ENCODE measurements at regions of chr18 and their contacts with region 1.

Region 1: DNA sequence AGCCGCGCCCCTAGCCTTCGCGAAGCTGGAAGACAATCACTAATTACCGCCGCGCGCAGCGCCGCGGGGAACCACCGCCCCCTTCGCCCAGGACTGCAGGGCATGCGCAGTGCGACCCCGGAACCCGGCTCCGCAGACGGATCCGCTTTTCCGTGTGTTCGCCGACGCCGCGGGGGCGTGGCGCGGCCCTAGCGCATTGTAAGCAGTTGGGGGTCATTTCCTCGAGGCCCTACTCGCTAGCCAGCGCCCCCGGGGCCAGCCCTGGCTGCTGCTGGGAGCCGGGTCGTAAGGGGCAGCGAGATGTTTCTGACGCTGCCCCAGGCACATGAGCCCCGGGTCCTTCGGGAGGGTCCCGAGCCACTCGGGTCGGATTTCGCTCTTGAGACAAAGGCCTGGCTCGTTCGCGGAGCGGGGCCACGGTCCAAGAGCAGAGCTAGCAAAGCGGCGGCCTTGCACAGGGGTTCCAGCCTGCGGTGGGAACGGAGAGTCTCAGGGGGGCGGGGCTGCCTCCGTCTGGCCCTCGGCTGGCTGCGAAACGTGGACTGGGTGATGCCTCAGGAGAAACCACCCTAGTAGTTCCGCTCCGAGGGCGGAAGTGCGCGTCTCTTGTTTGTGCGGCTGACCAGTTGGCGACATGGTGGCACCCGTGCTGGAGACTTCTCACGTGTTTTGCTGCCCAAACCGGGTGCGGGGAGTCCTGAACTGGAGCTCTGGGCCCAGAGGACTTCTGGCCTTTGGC is at the starts of genes ELP2 and SLC39A6:
- DNase-seq: peak; percentile 96 to 98
- ATAC-seq: peak; percentile 96 to 97
- H3K4me3 ChIP-seq: peak within 1 kb of the TSS; percentile 93 to 100 (median 97)
- H3K27ac ChIP-seq: peak within 1 kb of the TSS; percentile 99 to 100 (median 100)
- H3K4me1 ChIP-seq: peaks cover 23 to 30% of the 10 kb centered on the region in 2 donors
- H3K27me3 ChIP-seq: no peaks in the 10 kb centered on the region
- CTCF ChIP-seq: no peak
- POLR2A ChIP-seq: peak; percentile 68 to 72
- total RNA-seq, gene ELP2: 23.7 to 51.0 (median 42.8) TPM
- total RNA-seq, gene SLC39A6: 16.7 to 24.7 (median 18.3) TPM

Region 2: DNA sequence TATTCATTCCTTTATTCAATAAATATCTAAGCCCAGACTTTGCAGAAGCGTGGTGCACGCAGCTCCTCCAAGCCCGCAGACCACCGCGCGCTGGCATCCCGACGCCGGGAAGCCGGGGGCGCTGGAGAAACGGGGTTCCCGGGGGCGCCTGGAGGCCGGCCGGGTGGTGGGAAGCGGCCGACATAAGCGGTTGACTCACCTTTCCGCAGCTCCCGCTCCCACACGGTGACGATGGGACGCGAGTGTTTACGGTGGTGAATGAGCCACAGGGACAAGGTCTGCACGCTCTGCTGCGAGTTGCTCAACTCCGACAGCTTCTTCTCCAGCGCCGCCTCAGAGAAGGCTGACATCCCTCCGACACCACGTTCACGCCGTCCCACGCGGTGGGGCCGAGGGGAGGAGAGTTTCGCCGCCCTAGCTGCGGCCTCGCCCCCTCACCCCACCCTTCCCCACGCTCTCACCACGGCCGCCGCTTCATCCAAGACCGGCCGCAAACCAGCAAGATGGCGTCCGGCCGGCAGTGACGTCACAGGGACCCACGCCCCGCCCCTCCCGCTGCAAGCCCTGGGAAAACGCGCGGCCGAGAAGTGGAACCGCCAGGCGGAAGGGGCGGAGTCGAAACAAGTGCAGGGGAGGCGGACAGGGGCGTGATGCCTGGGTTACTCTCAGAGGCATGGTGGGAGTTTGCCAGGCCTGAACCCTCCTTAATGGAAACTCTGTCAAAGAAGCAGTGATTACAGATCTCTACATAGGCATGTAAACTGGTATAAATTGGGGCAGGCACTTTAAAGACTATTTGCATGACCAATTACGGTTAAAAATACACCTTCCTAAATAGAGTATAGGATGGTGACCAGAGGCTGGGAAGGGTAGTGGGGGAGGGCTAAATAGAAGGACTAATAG is 62.2 kb before region 1 on chr18 and contains the start of gene RPRD1A:
- in situ Hi-C with region 1: loop called in 1 of 4 experiments (anchors 5 kb)
- intact Hi-C with region 1: loop called (anchors 1 kb)
- DNase-seq: peak; percentile 89 to 93
- ATAC-seq: peak; percentile 97 to 99
- H3K4me3 ChIP-seq: peak within 1 kb of the TSS; percentile 73 to 93 (median 83)
- H3K27ac ChIP-seq: peak within 1 kb of the TSS; percentile 84 to 91 (median 88)
- H3K4me1 ChIP-seq: peaks cover 10 to 15% of the 10 kb centered on the region in 2 donors
- H3K27me3 ChIP-seq: no peaks in the 10 kb centered on the region
- CTCF ChIP-seq: peak in 1 of 5 experiments; percentile 9
- POLR2A ChIP-seq: peak; percentile 47 to 55
- total RNA-seq, gene RPRD1A: 59.6 to 63.8 (median 61.8) TPM

Measured in gastrocnemius medialis (tissue), 4 donors.